GM18951 (cell line): ENCODE measurements at regions of chr10 and their contacts with region 1.

Region 1: DNA sequence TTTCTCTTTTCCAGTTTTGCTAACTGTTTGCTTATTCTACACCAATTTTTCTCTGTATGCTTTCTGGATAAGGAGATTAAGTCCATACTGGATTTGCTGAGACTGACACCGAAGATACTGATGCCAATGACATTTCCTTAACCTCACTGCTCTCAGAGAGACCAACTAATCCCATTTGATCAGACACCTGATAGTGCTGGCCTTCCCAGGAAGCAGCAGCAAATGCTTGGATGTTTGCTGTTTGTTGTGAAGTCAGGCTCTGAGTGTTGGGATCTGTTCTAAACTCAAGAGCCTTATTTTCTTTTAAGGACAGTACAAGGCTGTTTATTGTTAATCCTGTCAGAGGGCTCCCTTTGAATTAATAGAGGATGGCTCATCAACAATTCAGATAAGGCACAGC is 143.3 kb downstream of the ANK3 start:
- POLR2A ChIP-seq: no peak

Region 2: GRCh38 chr10:60414805-60415585 is 168.6 kb after region 1 on chr10:
- in situ Hi-C with region 1: loop called (anchors 10 kb)
- POLR2A ChIP-seq: no peak

Region 3: GRCh38 chr10:60495338-60496055 is 249.1 kb after region 1 on chr10:
- in situ Hi-C with region 1: no loop called
- POLR2A ChIP-seq: no peak